ENCODE measurements at regions of chr11 and their contacts with region 1.

Region 1: GRCh38 chr11:46346886-46347636 is at the start of gene DGKZ:
- DNase-seq: peak; percentile 77 to 97 (median 88)
- ATAC-seq: peak; percentile 77
- H3K4me3 ChIP-seq: peak within 1 kb of the TSS; percentile 99
- H3K4me3 Mint-ChIP-seq: peak within 1 kb of the TSS; percentile 95
- H3K27ac ChIP-seq: peak within 1 kb of the TSS; percentile 44 to 73
- H3K27ac Mint-ChIP-seq: peak within 1 kb of the TSS; percentile 89
- H3K4me1 ChIP-seq: peaks cover 86% of the 10 kb centered on the region
- H3K4me1 Mint-ChIP-seq: peaks cover 83% of the 10 kb centered on the region
- H3K27me3 ChIP-seq: no peaks in the 10 kb centered on the region
- H3K27me3 Mint-ChIP-seq: no peaks in the 10 kb centered on the region
- CTCF ChIP-seq: peak; percentile 34
- total RNA-seq, gene DGKZ: 159 to 166 TPM

Region 2: GRCh38 chr11:46332568-46333393 is 14.3 kb before region 1 on chr11:
- CTCF ChIA-PET with region 1: interaction called, 24 read pairs
- POLR2A ChIA-PET with region 1: interaction called, 266 read pairs
- intact Hi-C with region 1: loop called (anchors 1 to 2 kb)
- DNase-seq: peak in 10 of 14 experiments; percentile 30 to 71 (median 54)
- ATAC-seq: peak; percentile 6
- H3K4me3 ChIP-seq: peak overlapping the region; percentile 71
- H3K4me3 Mint-ChIP-seq: peak overlapping the region; percentile 94
- H3K27ac ChIP-seq: peak overlapping the region in 1 of 2 donors; percentile 73
- H3K27ac Mint-ChIP-seq: peak overlapping the region; percentile 91
- H3K4me1 ChIP-seq: peaks cover 80% of the 10 kb centered on the region
- H3K4me1 Mint-ChIP-seq: peaks cover 76% of the 10 kb centered on the region
- H3K27me3 ChIP-seq: peaks cover 0 to 5% of the 10 kb centered on the region in 2 experiments
- H3K27me3 Mint-ChIP-seq: no peaks in the 10 kb centered on the region
- CTCF ChIP-seq: no peak

Region 3: GRCh38 chr11:46361283-46362155 is 14.5 kb after region 1 on chr11:
- CTCF ChIA-PET with region 1: interaction called, 40 read pairs
- POLR2A ChIA-PET with region 1: interaction called, 26 read pairs
- intact Hi-C with region 1: loop called in 1 of 2 experiments (anchors 1 kb)
- DNase-seq: peak; percentile 47 to 84 (median 65)
- ATAC-seq: peak; percentile 99
- H3K4me3 ChIP-seq: peak overlapping the region; percentile 55
- H3K4me3 Mint-ChIP-seq: peak overlapping the region; percentile 84
- H3K27ac ChIP-seq: peak overlapping the region; percentile 68 to 81
- H3K27ac Mint-ChIP-seq: peak overlapping the region; percentile 91
- H3K4me1 ChIP-seq: peaks cover 75% of the 10 kb centered on the region
- H3K4me1 Mint-ChIP-seq: peaks cover 69% of the 10 kb centered on the region
- H3K27me3 ChIP-seq: no peaks in the 10 kb centered on the region
- H3K27me3 Mint-ChIP-seq: no peaks in the 10 kb centered on the region
- CTCF ChIP-seq: no peak

Region 4: DNA sequence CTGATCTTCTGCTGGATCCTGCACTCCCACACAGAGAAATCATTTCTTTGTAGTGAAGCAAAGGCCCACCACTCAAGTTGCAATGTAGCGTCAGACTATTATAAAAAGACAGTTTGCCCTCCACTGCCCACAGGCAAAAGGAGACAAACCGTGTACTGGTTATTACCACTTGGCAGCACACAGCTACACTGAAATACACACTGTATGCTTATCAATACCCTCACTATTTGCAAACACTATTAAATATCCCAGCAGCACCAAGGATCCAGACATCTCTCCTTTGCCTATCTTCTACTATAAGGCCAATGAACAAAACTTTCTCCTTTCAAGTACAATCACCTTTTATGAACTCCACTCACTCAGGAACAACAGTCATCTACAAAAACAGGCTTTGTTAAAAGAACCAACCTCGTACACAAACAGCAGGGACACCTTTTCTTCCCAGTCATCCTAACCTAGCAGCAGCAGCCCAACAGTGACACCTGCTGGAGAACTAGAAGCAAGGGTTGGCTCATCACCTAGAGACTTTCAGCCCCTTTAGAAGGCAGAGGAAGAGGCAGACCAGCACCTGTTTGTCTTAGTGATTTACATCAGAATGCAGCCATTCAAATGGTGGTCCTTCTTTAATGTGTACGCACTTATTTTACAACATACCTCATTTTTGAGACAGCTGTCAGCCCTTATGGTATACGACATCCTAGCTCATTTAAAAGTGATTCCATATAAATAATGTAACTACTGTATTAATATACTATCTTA is 190.7 kb after region 1 on chr11:
- CTCF ChIA-PET with region 1: no interaction called
- POLR2A ChIA-PET with region 1: no interaction called
- intact Hi-C with region 1: loop called (anchors 5 to 10 kb)
- DNase-seq: peak; percentile 30 to 82 (median 48)
- ATAC-seq: peak; percentile 96
- H3K4me3 ChIP-seq: no peak overlapping the region
- H3K4me3 Mint-ChIP-seq: no peak overlapping the region
- H3K27ac ChIP-seq: no peak overlapping the region
- H3K27ac Mint-ChIP-seq: peak overlapping the region; percentile 1
- H3K4me1 ChIP-seq: peaks cover 3% of the 10 kb centered on the region
- H3K4me1 Mint-ChIP-seq: peaks cover 36% of the 10 kb centered on the region
- H3K27me3 ChIP-seq: no peaks in the 10 kb centered on the region
- H3K27me3 Mint-ChIP-seq: no peaks in the 10 kb centered on the region
- CTCF ChIP-seq: peak; percentile 96

Region 5: DNA sequence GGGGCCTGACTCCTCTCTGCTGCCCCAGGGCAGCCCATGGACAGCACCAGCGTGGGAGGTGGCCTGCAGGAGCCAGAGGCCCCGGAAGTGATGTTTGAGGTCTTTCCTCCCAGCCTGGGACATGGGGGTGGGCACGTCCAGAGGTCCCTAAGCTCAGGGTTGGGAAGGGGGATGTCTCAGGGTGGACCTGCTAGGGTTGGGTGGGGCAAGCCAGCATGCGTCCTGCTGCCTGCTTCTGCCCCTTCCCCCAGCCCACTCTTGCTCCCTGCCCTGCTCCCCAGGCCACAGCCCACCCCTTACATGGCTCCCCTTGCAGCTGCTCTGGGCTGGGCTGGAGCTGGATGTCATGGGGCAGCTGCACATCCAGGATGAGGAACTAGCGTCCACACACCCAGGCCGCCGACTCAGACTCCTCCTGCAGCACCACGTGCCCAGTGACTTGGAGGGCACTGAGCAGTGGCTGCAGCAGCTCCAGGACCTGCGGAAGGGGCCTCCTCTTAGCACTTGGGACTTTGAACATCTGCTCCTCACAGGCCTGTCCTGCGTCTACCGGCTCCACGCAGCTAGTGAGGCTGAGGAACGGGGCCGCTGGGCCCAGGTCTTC is 1240.8 kb after region 1 on chr11:
- CTCF ChIA-PET with region 1: no interaction called
- POLR2A ChIA-PET with region 1: no interaction called
- intact Hi-C with region 1: no loop called
- DNase-seq: peak in 3 of 14 experiments; percentile 7 to 49 (median 40)
- ATAC-seq: no peak
- H3K4me3 ChIP-seq: no peak overlapping the region
- H3K4me3 Mint-ChIP-seq: no peak overlapping the region
- H3K27ac ChIP-seq: no peak overlapping the region
- H3K27ac Mint-ChIP-seq: no peak overlapping the region
- H3K4me1 ChIP-seq: no peaks in the 10 kb centered on the region
- H3K4me1 Mint-ChIP-seq: no peaks in the 10 kb centered on the region
- H3K27me3 ChIP-seq: peaks cover 4 to 9% of the 10 kb centered on the region in 2 experiments
- H3K27me3 Mint-ChIP-seq: peaks cover 6% of the 10 kb centered on the region
- CTCF ChIP-seq: no peak

Measured in CD4-positive, alpha-beta T cell (primary cell).